ENCODE measurements at regions of chr22 and their contacts with region 1.

Region 1: DNA sequence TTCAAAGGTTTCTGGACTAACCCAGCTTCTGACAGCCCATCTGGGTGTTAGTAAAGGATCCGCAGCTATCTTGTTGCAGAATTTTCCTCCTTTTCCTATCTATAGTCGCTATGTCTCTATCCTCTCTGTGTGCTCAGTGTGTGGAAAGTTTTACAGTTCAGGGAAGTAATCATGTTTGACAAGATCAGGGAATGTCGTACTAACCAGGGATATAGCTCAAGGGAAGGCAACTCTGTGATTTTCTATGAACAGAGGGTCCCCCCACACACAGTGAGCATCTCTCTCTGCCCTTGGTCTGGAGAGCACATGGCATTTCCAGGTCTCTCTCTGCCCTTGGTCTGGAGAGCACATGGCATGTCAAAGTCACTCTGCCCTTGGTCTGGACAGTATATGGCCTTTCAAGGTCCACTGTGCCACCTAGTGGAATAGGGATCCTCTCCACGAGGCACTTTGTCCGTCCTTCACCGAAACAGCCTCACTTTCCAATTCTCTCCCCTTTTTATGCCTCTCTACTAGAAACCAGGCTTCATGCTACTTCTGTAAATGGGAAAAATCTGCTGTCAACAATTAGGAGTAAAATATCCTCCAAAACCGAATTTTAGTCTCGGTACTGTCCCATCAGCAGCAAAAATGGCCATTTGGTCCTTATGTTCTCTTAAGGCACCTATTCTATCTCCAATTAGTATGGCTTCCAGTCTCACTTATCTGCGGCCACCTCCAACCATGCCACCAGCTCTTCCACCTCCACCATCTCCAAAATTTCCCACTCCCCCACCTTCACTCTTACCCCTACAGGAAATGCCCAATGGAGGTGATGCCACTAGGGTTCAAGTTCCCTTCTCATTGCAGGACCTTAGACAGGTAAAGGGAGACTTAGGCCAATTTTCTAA is 88.7 kb downstream of the IGLL5 start:
- DNase-seq: no peak
- H3K4me3 ChIP-seq: no peak overlapping the region
- H3K27ac ChIP-seq: no peak overlapping the region
- H3K4me1 ChIP-seq: no peaks in the 10 kb centered on the region
- H3K27me3 ChIP-seq: peaks cover 0 to 8% (median 0%) of the 10 kb centered on the region in 7 donors
- CTCF ChIP-seq: no peak
- POLR2A ChIP-seq: no peak

Region 2: DNA sequence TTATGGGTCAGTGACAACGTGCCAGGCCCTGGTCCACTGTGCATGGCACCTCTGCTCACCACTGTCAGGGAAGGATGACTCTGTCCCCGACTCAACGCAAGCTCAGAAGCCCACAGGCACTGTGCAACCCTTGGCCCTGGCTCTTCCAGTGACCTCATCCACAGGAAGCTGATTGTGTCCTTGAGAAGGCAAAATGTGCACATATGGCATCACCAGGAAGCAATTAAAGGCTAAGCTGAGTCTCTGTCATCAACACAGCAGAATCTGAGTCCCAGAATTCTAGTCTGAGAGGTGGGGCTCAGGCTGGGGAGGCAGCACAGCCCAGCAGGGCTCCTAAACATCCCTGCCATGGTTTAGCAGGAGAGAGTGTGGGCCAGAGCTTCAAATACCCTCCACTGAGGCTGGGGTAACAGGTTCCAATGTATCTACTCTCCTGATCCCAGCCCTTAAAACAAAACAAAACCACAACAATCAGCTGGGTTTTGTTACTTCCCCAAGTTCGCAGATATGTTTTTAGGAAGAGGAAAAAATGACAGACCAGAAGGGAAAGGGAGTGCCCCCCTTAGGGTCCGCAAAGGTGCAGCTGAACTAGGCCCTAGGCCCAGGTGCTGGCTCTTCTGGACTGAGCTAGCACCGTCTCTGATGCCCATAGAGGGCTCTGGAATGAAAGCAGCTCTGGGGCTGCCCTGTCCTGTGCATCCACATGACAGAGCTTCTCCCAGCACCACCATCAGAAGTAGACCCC is 60.6 kb after region 1 on chr22:
- intact Hi-C with region 1: loop called (anchors 10 kb)
- DNase-seq: no peak
- H3K4me3 ChIP-seq: no peak overlapping the region
- H3K27ac ChIP-seq: peak overlapping the region in 7 of 8 donors; percentile 2 to 80 (median 65)
- H3K4me1 ChIP-seq: peaks cover 5 to 43% (median 33%) of the 10 kb centered on the region in 6 donors
- H3K27me3 ChIP-seq: peaks cover 0 to 9% (median 0%) of the 10 kb centered on the region in 7 donors
- CTCF ChIP-seq: no peak
- POLR2A ChIP-seq: no peak

Measured in spleen (tissue), 13 donors.